ENCODE measurements at regions of chr9 and their contacts with region 1.

Region 1: GRCh38 chr9:36995927-36996705 is 38.0 kb downstream of the PAX5 start:
- DNase-seq: peak in 4 of 5 donors; percentile 46 to 53 (median 48)
- H3K4me3 ChIP-seq: no peak overlapping the region
- H3K4me3 Mint-ChIP-seq: peak overlapping the region in 6 of 8 donors; percentile 44 to 68 (median 62)
- H3K27ac ChIP-seq: no peak overlapping the region
- H3K27ac Mint-ChIP-seq: no peak overlapping the region
- H3K4me1 ChIP-seq: no peaks in the 10 kb centered on the region
- H3K4me1 Mint-ChIP-seq: peaks cover 0 to 3% (median 0%) of the 10 kb centered on the region in 4 donors
- H3K27me3 ChIP-seq: no peaks in the 10 kb centered on the region
- H3K27me3 Mint-ChIP-seq: peaks cover 20 to 25% of the 10 kb centered on the region in 2 donors

Region 2: GRCh38 chr9:37309136-37309535 is 313.0 kb after region 1 on chr9:
- CTCF ChIA-PET with region 1: interaction called, 3 read pairs
- POLR2A ChIA-PET with region 1: no interaction called
- intact Hi-C with region 1: loop called (anchors 1 kb)
- DNase-seq: peak in 1 of 5 donors; percentile 5
- H3K4me3 ChIP-seq: no peak overlapping the region
- H3K4me3 Mint-ChIP-seq: no peak overlapping the region
- H3K27ac ChIP-seq: no peak overlapping the region
- H3K27ac Mint-ChIP-seq: no peak overlapping the region
- H3K4me1 ChIP-seq: no peaks in the 10 kb centered on the region
- H3K4me1 Mint-ChIP-seq: peaks cover 0 to 3% (median 1%) of the 10 kb centered on the region in 4 donors
- H3K27me3 ChIP-seq: no peaks in the 10 kb centered on the region
- H3K27me3 Mint-ChIP-seq: no peaks in the 10 kb centered on the region

Region 3: GRCh38 chr9:37329576-37329975 is 333.5 kb after region 1 on chr9:
- CTCF ChIA-PET with region 1: interaction called, 17 read pairs
- POLR2A ChIA-PET with region 1: no interaction called
- intact Hi-C with region 1: loop called (anchors 1 kb)
- DNase-seq: peak in 4 of 5 donors; percentile 8 to 12 (median 10)
- H3K4me3 ChIP-seq: no peak overlapping the region
- H3K4me3 Mint-ChIP-seq: no peak overlapping the region
- H3K27ac ChIP-seq: no peak overlapping the region
- H3K27ac Mint-ChIP-seq: no peak overlapping the region
- H3K4me1 ChIP-seq: no peaks in the 10 kb centered on the region
- H3K4me1 Mint-ChIP-seq: no peaks in the 10 kb centered on the region
- H3K27me3 ChIP-seq: no peaks in the 10 kb centered on the region
- H3K27me3 Mint-ChIP-seq: no peaks in the 10 kb centered on the region

Region 4: DNA sequence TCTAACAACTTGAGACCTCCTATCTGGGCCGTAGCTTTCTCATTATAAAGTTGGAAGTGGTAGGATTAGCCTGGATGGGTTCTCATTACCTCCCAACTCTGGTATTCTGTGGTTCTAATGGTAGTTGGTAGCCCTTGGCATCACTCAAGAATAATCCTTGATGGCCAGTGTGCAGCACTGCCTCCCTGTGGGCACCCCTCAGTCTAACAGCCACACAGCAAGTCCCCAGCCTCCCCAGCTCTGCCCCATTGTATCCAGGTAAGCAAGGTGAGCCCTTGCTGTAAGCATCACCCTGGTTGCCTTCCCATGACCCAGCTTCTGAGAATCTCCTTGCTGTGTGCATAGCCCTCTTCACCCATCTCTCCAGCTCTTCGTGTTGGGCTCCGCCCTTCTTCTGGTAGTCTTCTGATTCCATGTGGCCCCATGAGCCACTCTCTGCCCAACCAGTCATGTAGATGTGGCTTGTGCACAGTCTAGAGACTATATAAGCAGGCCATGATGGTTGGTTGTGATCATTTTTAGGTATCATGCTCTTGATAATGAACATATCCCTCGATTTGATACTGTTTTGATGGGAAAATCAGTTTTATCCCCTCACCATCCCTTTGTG is 368.7 kb after region 1 on chr9:
- CTCF ChIA-PET with region 1: interaction called, 10 read pairs
- POLR2A ChIA-PET with region 1: no interaction called
- intact Hi-C with region 1: loop called (anchors 1 kb)
- DNase-seq: peak in 3 of 5 donors; percentile 4 to 9 (median 6)
- H3K4me3 ChIP-seq: no peak overlapping the region
- H3K4me3 Mint-ChIP-seq: no peak overlapping the region
- H3K27ac ChIP-seq: no peak overlapping the region
- H3K27ac Mint-ChIP-seq: peak overlapping the region in 1 of 7 donors; percentile 15
- H3K4me1 ChIP-seq: no peaks in the 10 kb centered on the region
- H3K4me1 Mint-ChIP-seq: no peaks in the 10 kb centered on the region
- H3K27me3 ChIP-seq: no peaks in the 10 kb centered on the region
- H3K27me3 Mint-ChIP-seq: no peaks in the 10 kb centered on the region

Region 5: GRCh38 chr9:37390759-37391158 is 394.6 kb after region 1 on chr9:
- CTCF ChIA-PET with region 1: interaction called, 8 read pairs
- POLR2A ChIA-PET with region 1: no interaction called
- intact Hi-C with region 1: loop called (anchors 1 kb)
- DNase-seq: peak in 4 of 5 donors; percentile 11 to 26 (median 14)
- H3K4me3 ChIP-seq: no peak overlapping the region
- H3K4me3 Mint-ChIP-seq: no peak overlapping the region
- H3K27ac ChIP-seq: no peak overlapping the region
- H3K27ac Mint-ChIP-seq: no peak overlapping the region
- H3K4me1 ChIP-seq: no peaks in the 10 kb centered on the region
- H3K4me1 Mint-ChIP-seq: no peaks in the 10 kb centered on the region
- H3K27me3 ChIP-seq: no peaks in the 10 kb centered on the region
- H3K27me3 Mint-ChIP-seq: peaks cover 1 to 2% of the 10 kb centered on the region in 2 donors